Stomach (tissue), 19 donors: ENCODE measurements at regions of chr17 and their contacts with region 1.

Region 1: DNA sequence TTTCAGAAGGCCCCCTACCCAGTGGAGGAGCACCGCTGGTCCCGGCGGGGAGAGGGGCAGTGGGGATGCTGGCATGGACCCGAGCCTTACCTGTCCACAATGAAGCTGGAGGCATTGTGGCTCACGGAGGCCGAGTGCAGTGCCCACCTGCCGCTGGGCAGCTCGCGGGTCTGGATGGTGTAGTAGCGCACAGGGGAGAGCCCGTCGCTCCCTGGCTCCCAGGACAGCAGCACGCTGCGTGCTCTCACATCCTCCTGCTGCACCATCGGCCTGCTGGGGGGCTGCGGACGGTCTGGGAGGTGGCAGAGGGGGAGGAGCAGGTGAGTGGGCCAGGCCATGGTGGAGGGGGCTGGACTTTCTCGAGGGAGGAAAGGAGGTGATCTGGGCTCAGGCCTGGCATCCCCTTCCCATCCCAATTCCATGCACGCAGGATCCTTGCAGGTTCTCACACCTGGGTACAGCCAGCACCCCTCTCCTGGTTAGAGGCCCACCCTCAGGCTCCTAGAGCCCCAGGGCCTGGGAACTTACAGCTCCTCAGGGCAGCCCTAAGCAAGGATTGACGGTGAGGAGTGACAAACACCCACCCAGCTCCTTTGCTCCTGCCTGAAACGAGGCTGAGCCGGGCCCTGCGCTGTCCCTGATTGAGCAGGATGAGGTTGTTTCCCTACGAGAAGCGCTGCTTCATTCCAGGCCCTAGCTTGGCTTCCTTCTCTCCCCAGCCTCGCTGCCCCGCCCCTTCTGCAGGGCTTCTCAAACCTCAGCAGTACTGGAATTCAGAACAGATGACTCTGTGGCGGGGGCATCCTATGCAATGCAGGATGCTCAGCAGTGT is 76.2 kb upstream of the CDC42EP4 start:
- DNase-seq: no peak
- H3K4me3 ChIP-seq: no peak overlapping the region
- H3K27ac ChIP-seq: no peak overlapping the region
- H3K4me1 ChIP-seq: no peaks in the 10 kb centered on the region
- H3K27me3 ChIP-seq: no peaks in the 10 kb centered on the region
- CTCF ChIP-seq: no peak
- EP300 ChIP-seq: no peak
- POLR2A ChIP-seq: no peak

Region 2: DNA sequence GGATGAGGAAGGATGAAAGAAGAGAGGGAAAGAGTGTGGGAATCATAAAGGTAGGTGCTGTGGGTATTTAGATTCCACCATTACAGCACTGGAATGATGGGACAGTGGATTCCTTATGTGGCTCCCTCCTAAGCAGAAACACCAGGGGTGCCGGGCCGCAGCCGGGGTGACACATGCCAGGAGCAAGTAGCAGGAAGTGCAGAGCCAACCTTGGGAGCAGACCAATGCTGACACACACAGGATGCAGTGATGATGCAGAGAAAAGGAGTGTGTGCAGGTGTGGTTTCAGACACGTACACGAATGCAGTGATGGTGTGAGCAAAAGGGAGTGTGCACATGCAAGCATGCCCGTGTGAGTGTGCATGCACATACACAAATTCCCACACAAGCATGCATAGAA is 633.4 kb before region 1 on chr17:
- intact Hi-C with region 1: loop called (anchors 10 kb)
- DNase-seq: no peak
- H3K4me3 ChIP-seq: no peak overlapping the region
- H3K27ac ChIP-seq: no peak overlapping the region
- H3K4me1 ChIP-seq: no peaks in the 10 kb centered on the region
- H3K27me3 ChIP-seq: no peaks in the 10 kb centered on the region
- CTCF ChIP-seq: no peak
- EP300 ChIP-seq: no peak
- POLR2A ChIP-seq: no peak

Region 3: DNA sequence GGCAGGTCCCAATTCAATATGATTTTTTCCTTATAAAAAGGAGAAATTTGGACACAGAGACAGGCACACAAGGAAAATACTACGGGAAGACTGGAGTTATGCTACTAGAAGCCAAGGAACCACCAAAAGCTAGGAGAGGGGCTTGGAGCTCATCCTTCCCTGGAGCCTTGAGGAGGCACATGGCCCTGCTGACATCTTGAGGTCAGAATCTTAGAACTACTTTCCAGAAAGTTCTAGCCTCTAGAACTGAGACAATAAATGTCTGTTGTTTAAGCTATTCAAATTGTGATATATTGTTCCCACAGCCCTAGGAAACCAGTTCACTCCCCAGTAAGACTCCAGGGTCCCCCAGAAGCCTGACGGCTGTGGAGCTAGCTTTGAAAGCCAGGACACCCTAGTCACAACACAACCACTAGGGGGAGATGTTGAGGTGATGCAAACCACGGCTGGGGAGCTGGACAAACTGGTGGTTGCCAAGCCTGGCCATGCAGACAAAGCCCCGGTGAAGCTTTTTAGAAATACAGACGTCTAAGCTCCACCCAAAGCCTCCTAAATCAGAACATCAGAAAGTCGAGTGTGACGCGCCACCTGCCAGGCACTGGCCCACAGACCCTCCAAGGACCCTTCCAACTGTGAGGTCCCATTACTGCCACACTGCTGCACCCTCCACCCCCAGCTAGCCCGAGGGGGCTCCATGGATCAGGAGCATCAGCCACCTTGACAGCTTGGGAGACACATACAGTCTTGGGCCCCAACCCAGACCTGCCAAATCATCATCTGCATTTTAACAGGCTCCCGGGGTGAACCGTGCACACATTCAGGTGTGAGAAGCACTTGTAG is 401.9 kb before region 1 on chr17:
- intact Hi-C with region 1: no loop called
- DNase-seq: peak; percentile 75 to 88
- H3K4me3 ChIP-seq: no peak overlapping the region
- H3K27ac ChIP-seq: no peak overlapping the region
- H3K4me1 ChIP-seq: peaks cover 4 to 19% (median 11%) of the 10 kb centered on the region in 4 donors
- H3K27me3 ChIP-seq: no peaks in the 10 kb centered on the region
- CTCF ChIP-seq: peak in 5 of 7 experiments; percentile 56 to 86 (median 76)
- EP300 ChIP-seq: no peak
- POLR2A ChIP-seq: no peak